Colonic mucosa (tissue), 4 donors: ENCODE measurements at regions of chr11 and their contacts with region 1.

Region 1: GRCh38 chr11:447923-448731 is 2.0 kb upstream of the PTDSS2 start:
- DNase-seq: peak; percentile 98
- H3K4me3 ChIP-seq: peak overlapping the region; percentile 52
- H3K27ac ChIP-seq: peak overlapping the region; percentile 94
- H3K4me1 ChIP-seq: peaks cover 13% of the 10 kb centered on the region
- H3K27me3 ChIP-seq: no peaks in the 10 kb centered on the region
- CTCF ChIP-seq: peak; percentile 74

Region 2: DNA sequence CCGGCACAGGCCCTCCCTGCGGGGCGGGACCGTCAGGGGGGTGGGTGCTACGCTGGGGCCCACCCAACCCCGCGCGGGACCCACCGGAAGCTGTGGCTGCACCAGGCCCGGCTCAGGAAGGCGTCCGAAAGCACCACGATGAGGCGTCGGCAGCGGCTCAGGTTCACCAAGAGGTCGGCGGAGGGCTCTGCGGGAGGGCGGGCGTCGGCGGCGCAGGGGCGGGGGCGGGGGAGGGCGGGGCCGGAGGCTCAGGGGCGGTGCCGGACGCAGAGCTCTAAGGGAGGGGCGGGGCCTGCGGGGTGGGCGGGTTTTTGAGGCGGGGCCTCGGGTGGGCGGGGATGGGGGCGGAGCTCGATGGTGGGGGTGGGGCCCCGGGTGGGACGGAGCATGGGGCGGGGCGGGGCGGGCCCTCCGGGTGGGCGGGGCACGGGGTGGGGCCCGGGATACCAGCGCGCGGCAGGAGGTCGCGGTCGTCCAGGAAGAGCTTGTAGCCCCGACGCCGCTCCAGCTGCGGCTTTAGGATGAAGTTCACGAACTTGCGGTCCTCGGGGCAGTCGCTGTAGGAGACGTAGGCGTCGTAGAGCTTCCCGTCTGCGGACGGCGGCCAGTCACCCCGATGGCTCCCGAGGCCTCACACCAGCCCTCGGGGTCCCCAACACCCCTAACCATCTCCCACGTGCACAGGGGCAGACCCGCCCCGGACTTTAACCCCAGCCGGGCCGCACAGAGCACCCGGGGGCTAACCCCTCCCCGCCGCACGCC is 41.0 kb before region 1 on chr11:
- intact Hi-C with region 1: loop called (anchors 5 kb)
- DNase-seq: peak; percentile 86
- H3K4me3 ChIP-seq: peak overlapping the region; percentile 50
- H3K27ac ChIP-seq: peak overlapping the region; percentile 86
- H3K4me1 ChIP-seq: peaks cover 9% of the 10 kb centered on the region
- H3K27me3 ChIP-seq: no peaks in the 10 kb centered on the region
- CTCF ChIP-seq: no peak

Region 3: GRCh38 chr11:503179-503981 is 55.3 kb after region 1 on chr11:
- intact Hi-C with region 1: loop called (anchors 5 kb)
- DNase-seq: peak; percentile 47
- H3K4me3 ChIP-seq: peak overlapping the region; percentile 47
- H3K27ac ChIP-seq: no peak overlapping the region
- H3K4me1 ChIP-seq: peaks cover 20% of the 10 kb centered on the region
- H3K27me3 ChIP-seq: no peaks in the 10 kb centered on the region
- CTCF ChIP-seq: no peak

Region 4: DNA sequence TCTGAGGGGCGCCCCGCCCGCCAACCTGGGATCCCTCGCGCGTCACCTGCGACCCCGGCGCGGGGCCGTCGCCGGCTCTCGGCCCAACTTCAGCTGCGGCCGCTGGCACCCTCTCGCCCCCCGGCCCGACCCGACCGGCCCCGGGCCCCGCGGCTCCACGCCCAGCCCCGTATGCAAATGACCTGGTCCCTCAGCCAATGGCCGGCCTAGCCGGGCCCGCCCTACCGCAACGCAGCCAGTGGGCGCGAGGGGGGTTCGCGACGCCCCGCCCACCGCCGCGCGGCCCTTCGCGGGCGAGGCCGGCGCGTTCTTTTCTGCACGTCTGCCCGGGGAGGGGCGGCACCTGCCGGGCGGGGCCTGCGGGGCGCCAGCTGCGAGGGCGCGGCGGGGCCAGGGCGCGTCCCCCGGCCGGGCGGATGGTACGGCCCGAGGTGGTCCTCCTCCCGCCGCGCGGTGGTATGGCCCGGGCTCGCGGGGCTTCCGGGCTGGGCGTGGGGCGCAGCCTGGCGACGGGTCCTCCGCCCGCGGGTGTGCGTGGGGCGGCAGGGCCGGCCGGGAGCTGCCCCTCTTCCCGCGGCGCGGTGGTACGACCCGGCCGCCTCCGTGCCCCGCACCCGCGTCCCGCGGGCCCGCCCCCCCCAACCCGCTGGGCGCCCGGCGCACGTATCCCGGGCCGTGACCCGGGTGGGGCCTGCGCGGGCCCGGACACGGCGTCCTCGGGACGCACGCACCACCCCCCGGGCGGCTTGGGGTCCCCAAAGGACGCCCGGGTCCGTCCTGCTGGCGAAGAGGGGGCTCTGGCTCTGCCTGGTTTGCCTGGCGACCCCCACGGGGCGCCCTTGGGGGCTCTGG is 120.4 kb after region 1 on chr11:
- intact Hi-C with region 1: no loop called
- DNase-seq: peak; percentile 94
- H3K4me3 ChIP-seq: peak overlapping the region; percentile 63
- H3K27ac ChIP-seq: peak overlapping the region; percentile 86
- H3K4me1 ChIP-seq: no peaks in the 10 kb centered on the region
- H3K27me3 ChIP-seq: no peaks in the 10 kb centered on the region
- CTCF ChIP-seq: no peak